ENCODE measurements at regions of chr17 and their contacts with region 1.

Region 1: DNA sequence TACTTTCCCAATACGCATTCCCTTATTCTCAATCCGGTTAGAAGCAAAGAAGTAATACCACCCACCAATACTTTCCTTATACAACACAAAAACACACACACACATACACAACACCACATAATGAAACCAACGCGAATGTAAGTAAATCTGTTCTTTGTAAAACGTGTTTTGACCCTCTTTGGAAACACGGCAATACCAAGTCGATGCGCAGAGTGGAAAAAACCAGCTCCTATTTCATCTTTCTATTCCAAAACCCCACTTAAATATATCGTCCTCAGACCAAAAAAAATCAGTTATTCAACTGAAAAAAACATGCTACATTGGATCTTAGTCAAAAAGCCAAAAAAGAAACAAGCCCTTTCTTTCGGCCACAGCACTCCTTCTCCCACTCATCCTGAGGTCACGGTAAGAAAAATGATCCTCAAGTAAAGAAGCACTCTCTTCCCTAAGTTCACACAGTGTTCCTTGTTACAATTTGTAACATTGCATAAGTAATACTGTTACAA is 31.0 kb upstream of the ARL4D start:
- DNase-seq: peak in 5 of 9 experiments; percentile 16 to 86 (median 24)
- ATAC-seq: peak; percentile 57
- H3K4me3 ChIP-seq: peak overlapping the region; percentile 73 to 76
- H3K4me3 Mint-ChIP-seq: peak overlapping the region; percentile 97
- H3K27ac ChIP-seq: peak overlapping the region; percentile 97 to 98
- H3K27ac Mint-ChIP-seq: peak overlapping the region; percentile 100
- H3K4me1 ChIP-seq: peaks cover 20% of the 10 kb centered on the region
- H3K4me1 Mint-ChIP-seq: peaks cover 38% of the 10 kb centered on the region
- H3K27me3 ChIP-seq: no peaks in the 10 kb centered on the region
- H3K27me3 Mint-ChIP-seq: no peaks in the 10 kb centered on the region
- CTCF ChIP-seq: no peak

Region 2: DNA sequence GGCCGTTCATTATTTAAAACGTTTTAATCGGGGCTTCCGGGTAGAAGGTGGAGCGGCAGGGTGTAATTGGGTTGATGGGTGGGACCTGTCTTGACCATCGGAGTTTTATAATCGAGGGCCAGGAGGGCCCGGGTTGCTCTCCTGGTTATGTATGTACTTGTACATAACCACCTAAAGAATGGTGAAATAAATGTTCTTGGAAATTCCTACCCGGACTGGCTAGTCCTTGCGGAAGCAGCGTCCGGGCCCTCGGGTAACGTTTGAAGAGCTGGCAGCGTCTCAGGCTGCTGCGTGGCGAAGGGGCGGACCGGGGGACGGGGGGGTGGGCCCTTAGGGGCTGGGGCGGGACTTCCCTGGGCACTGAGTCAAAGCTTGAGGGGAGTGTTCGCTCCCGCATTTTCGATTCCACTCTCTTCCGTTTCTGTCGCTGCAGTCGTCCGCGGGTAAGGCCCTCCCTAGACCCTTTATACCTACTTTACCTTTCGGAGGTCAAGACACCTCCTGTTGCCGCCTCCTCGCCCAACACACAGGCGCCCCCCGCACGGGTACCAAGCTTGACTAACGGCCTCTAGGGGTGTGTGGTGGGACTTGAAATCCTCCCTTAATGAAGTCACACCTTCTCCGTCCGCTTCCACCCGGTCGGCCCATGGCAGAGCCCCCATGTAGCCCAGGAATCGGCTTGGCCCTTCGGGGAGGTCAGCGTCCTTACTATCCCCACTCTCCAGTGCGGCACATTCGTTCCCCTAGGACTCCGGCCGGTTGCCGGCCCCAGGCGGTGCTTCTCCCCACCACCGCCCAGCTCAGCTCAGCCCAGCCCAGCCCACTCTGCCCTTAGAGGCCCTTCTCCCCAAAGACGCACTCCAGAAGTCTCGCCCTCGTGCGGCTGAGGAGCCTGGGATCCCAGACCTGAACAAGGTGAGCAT is 156.0 kb before region 1 on chr17 and contains the start of gene TMEM106A:
- CTCF ChIA-PET with region 1: no interaction called
- POLR2A ChIA-PET with region 1: interaction called, 12 read pairs
- intact Hi-C with region 1: no loop called
- DNase-seq: peak; percentile 50 to 89 (median 76)
- ATAC-seq: peak; percentile 92
- H3K4me3 ChIP-seq: peak within 1 kb of the TSS; percentile 82 to 95
- H3K4me3 Mint-ChIP-seq: peak within 1 kb of the TSS; percentile 98
- H3K27ac ChIP-seq: peak within 1 kb of the TSS; percentile 75 to 82
- H3K27ac Mint-ChIP-seq: peak within 1 kb of the TSS; percentile 96
- H3K4me1 ChIP-seq: peaks cover 25% of the 10 kb centered on the region
- H3K4me1 Mint-ChIP-seq: peaks cover 40% of the 10 kb centered on the region
- H3K27me3 ChIP-seq: no peaks in the 10 kb centered on the region
- H3K27me3 Mint-ChIP-seq: no peaks in the 10 kb centered on the region
- CTCF ChIP-seq: peak; percentile 58
- total RNA-seq, gene TMEM106A: 8.9 to 9.2 TPM

Region 3: DNA sequence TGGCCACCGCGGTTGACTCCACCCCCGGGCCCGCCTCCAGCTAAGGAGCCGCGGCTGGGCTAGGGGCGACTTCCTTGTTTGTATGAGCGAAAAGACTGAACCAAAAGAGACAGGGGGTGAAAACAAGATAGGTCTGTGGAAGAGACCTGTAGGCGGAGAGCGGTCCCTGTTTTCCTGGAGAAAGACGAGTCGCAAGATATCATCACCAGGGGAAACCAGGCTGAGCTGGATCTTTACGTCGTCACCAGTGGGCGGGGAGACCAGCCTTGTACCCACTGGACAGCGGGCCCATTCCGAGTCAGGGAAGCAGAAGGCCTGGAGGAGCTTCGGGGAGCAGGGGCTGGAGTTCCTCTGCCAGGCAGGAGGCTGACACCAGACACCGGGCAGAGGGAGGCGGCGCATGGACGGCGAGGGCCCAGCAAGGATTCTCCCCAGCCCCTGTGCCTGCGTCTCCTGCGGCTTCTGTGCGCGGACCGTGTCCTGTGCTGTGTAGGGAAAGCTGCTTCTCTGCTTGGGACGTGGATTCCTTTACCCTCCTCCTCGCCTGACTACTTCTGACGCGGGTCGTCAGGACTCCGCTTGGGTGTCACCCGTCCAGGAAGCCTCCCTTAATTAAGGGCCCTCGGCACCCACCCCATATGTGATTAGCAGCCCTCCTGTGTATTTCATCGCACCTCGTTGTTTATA is 20.7 kb after region 1 on chr17:
- CTCF ChIA-PET with region 1: interaction called, 24 read pairs
- POLR2A ChIA-PET with region 1: interaction called, 208 read pairs
- intact Hi-C with region 1: loop called (anchors 1 kb)
- DNase-seq: peak; percentile 88 to 96 (median 90)
- ATAC-seq: peak; percentile 71
- H3K4me3 ChIP-seq: peak overlapping the region; percentile 74 to 94
- H3K4me3 Mint-ChIP-seq: peak overlapping the region; percentile 89
- H3K27ac ChIP-seq: peak overlapping the region; percentile 94 to 96
- H3K27ac Mint-ChIP-seq: peak overlapping the region; percentile 97
- H3K4me1 ChIP-seq: peaks cover 14% of the 10 kb centered on the region
- H3K4me1 Mint-ChIP-seq: peaks cover 37% of the 10 kb centered on the region
- H3K27me3 ChIP-seq: no peaks in the 10 kb centered on the region
- H3K27me3 Mint-ChIP-seq: no peaks in the 10 kb centered on the region
- CTCF ChIP-seq: no peak

Region 4: GRCh38 chr17:43645765-43646481 is 278.1 kb after region 1 on chr17:
- CTCF ChIA-PET with region 1: no interaction called
- POLR2A ChIA-PET with region 1: no interaction called
- intact Hi-C with region 1: no loop called
- DNase-seq: peak in 5 of 9 experiments; percentile 6 to 33 (median 19)
- ATAC-seq: peak; percentile 51
- H3K4me3 ChIP-seq: peak overlapping the region in 1 of 2 experiments; percentile 30
- H3K4me3 Mint-ChIP-seq: peak overlapping the region; percentile 55
- H3K27ac ChIP-seq: no peak overlapping the region
- H3K27ac Mint-ChIP-seq: peak overlapping the region; percentile 32
- H3K4me1 ChIP-seq: peaks cover 1% of the 10 kb centered on the region
- H3K4me1 Mint-ChIP-seq: peaks cover 18% of the 10 kb centered on the region
- H3K27me3 ChIP-seq: no peaks in the 10 kb centered on the region
- H3K27me3 Mint-ChIP-seq: peaks cover 16% of the 10 kb centered on the region
- CTCF ChIP-seq: no peak

Measured in CD8-positive, alpha-beta T cell (primary cell).